ENCODE measurements at regions of chr12 and their contacts with region 1.

Region 1: GRCh38 chr12:85866986-85867776 is 6.9 kb upstream of the NTS start:
- DNase-seq: no peak
- H3K4me3 Mint-ChIP-seq: no peak overlapping the region
- H3K27ac Mint-ChIP-seq: no peak overlapping the region
- H3K4me1 Mint-ChIP-seq: no peaks in the 10 kb centered on the region
- H3K27me3 Mint-ChIP-seq: no peaks in the 10 kb centered on the region

Region 2: GRCh38 chr12:85575120-85576096 is 291.8 kb before region 1 on chr12:
- intact Hi-C with region 1: loop called (anchors 5 kb)
- DNase-seq: no peak
- H3K4me3 Mint-ChIP-seq: no peak overlapping the region
- H3K27ac Mint-ChIP-seq: no peak overlapping the region
- H3K4me1 Mint-ChIP-seq: no peaks in the 10 kb centered on the region
- H3K27me3 Mint-ChIP-seq: no peaks in the 10 kb centered on the region

Region 3: DNA sequence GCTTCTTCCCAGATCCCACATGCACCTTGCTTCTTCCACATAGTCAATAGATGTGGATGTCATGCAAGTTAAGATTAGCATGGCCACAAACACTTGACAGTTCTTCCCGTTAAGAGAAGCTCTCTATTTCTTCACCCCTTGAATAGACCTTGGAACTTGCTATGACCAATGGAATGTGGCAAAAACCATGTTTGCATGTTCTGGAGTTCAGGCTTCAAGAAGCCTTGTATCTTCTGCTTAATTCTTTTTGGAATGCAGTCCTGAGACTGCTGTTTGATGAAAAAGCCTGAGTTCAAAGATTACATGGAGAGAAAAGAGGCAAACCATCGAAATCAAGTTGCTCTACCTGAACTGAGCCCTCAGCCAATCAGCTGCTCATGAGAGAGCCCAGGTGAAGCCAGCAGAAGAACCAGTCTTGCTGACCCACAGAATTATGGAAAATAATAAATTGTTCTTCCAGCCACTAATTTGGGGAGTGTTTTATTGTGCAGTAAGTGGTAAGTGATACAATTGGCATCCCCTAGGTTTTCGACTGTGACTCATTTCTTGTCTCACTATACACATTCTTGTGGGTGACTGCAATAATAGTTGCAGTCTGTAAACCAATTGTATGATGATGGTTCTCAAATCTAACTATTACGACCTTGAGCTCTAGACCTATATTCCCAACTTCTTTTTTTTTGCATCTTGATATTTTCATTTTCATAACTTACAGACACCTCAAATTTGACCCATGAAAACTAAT is 43.6 kb before region 1 on chr12:
- intact Hi-C with region 1: no loop called
- DNase-seq: no peak
- H3K4me3 Mint-ChIP-seq: no peak overlapping the region
- H3K27ac Mint-ChIP-seq: no peak overlapping the region
- H3K4me1 Mint-ChIP-seq: no peaks in the 10 kb centered on the region
- H3K27me3 Mint-ChIP-seq: no peaks in the 10 kb centered on the region

Region 4: GRCh38 chr12:85894653-85895052 is 27.5 kb after region 1 on chr12:
- intact Hi-C with region 1: no loop called
- DNase-seq: no peak
- H3K4me3 Mint-ChIP-seq: no peak overlapping the region
- H3K27ac Mint-ChIP-seq: no peak overlapping the region
- H3K4me1 Mint-ChIP-seq: no peaks in the 10 kb centered on the region
- H3K27me3 Mint-ChIP-seq: no peaks in the 10 kb centered on the region

Region 5: GRCh38 chr12:86241600-86241999 is 374.4 kb after region 1 on chr12:
- intact Hi-C with region 1: no loop called
- DNase-seq: no peak
- H3K4me3 Mint-ChIP-seq: no peak overlapping the region
- H3K27ac Mint-ChIP-seq: no peak overlapping the region
- H3K4me1 Mint-ChIP-seq: no peaks in the 10 kb centered on the region
- H3K27me3 Mint-ChIP-seq: no peaks in the 10 kb centered on the region

Measured in activated T-helper 2 cell treated with anti-CD3 and anti-CD28 coated beads, Interferon-gamma antibody, Interleukin-2, Interleukin-4, amounts not matched to agents 10 μg/mL and 5 μg/mL and 100 μg/mL, durations not matched to agents 14 hours and 24 hours and 36 hours (primary cell).